CD4-positive, alpha-beta T cell (primary cell): ENCODE measurements at regions of chr15 and their contacts with region 1.

Region 1: DNA sequence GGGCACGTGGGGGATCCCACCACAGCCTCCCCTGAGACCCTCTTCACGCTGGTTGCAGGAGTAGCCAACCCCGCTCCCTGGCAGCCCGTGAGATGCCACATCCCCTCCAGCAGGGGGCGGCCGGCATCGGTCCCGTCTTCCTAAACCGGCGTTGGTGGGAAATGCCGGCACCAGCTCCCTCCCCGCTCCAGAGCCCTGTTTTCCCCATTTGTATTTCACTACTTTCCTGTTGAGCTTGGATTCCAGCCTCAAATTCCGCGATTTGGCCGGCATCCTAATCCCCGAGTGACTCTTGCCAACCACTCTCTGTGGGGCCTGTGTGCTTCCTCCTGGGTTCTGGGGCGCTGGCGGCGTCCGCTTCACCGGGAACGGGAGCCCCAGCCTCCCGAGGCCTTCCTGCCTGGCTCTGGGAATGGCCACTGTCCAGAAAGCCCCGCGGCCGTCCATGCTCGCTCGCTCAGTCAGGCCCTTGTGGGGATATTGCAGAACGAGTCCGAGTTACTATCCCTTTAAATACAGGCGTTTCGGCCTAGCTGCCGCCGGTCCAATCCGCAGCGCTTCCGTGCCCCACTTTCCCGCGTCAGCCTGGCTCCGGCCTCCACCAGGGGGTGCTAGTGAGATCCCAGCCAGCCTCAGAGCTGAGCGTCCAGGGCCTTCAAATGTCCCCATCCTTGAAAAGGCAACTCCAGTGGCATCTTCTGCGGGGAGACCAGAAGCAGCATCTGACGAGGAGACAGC is 8.1 kb upstream of the ADAMTS17 start:
- DNase-seq: peak; percentile 72 to 91 (median 79)
- ATAC-seq: peak; percentile 92
- H3K4me3 ChIP-seq: peak overlapping the region; percentile 92
- H3K4me3 Mint-ChIP-seq: peak overlapping the region; percentile 98
- H3K27ac ChIP-seq: peak overlapping the region; percentile 59 to 72
- H3K27ac Mint-ChIP-seq: peak overlapping the region; percentile 83
- H3K4me1 ChIP-seq: peaks cover 14% of the 10 kb centered on the region
- H3K4me1 Mint-ChIP-seq: peaks cover 13% of the 10 kb centered on the region
- H3K27me3 ChIP-seq: peaks cover 12 to 18% of the 10 kb centered on the region in 2 experiments
- H3K27me3 Mint-ChIP-seq: peaks cover 34% of the 10 kb centered on the region
- CTCF ChIP-seq: peak; percentile 90

Region 2: GRCh38 chr15:99733268-99734039 is 616.4 kb before region 1 on chr15 and contains the start of gene LYSMD4:
- CTCF ChIA-PET with region 1: no interaction called
- POLR2A ChIA-PET with region 1: no interaction called
- intact Hi-C with region 1: loop called in 1 of 2 experiments (anchors 5 kb)
- DNase-seq: peak; percentile 97 to 99 (median 98)
- ATAC-seq: peak; percentile 98
- H3K4me3 ChIP-seq: peak within 1 kb of the TSS; percentile 80
- H3K4me3 Mint-ChIP-seq: peak within 1 kb of the TSS; percentile 94
- H3K27ac ChIP-seq: peak within 1 kb of the TSS; percentile 81 to 85
- H3K27ac Mint-ChIP-seq: peak within 1 kb of the TSS; percentile 94
- H3K4me1 ChIP-seq: peaks cover 16% of the 10 kb centered on the region
- H3K4me1 Mint-ChIP-seq: peaks cover 28% of the 10 kb centered on the region
- H3K27me3 ChIP-seq: no peaks in the 10 kb centered on the region
- H3K27me3 Mint-ChIP-seq: no peaks in the 10 kb centered on the region
- CTCF ChIP-seq: no peak
- total RNA-seq, gene LYSMD4: 12.9 to 13.0 TPM

Region 3: GRCh38 chr15:100383302-100384107 is 33.6 kb after region 1 on chr15:
- CTCF ChIA-PET with region 1: interaction called, 11 read pairs
- POLR2A ChIA-PET with region 1: no interaction called
- intact Hi-C with region 1: no loop called
- DNase-seq: peak in 5 of 14 experiments; percentile 13 to 58 (median 50)
- ATAC-seq: no peak
- H3K4me3 ChIP-seq: no peak overlapping the region
- H3K4me3 Mint-ChIP-seq: no peak overlapping the region
- H3K27ac ChIP-seq: no peak overlapping the region
- H3K27ac Mint-ChIP-seq: no peak overlapping the region
- H3K4me1 ChIP-seq: no peaks in the 10 kb centered on the region
- H3K4me1 Mint-ChIP-seq: no peaks in the 10 kb centered on the region
- H3K27me3 ChIP-seq: no peaks in the 10 kb centered on the region
- H3K27me3 Mint-ChIP-seq: peaks cover 7% of the 10 kb centered on the region
- CTCF ChIP-seq: peak; percentile 22

Region 4: GRCh38 chr15:100596792-100597191 is 246.9 kb after region 1 on chr15:
- CTCF ChIA-PET with region 1: interaction called, 18 read pairs
- POLR2A ChIA-PET with region 1: interaction called, 23 read pairs
- intact Hi-C with region 1: loop called in 1 of 2 experiments (anchors 10 kb)
- DNase-seq: peak; percentile 58 to 96 (median 87)
- ATAC-seq: peak; percentile 84
- H3K4me3 ChIP-seq: peak overlapping the region; percentile 42
- H3K4me3 Mint-ChIP-seq: peak overlapping the region; percentile 71
- H3K27ac ChIP-seq: peak overlapping the region; percentile 75 to 81
- H3K27ac Mint-ChIP-seq: no peak overlapping the region
- H3K4me1 ChIP-seq: peaks cover 69% of the 10 kb centered on the region
- H3K4me1 Mint-ChIP-seq: peaks cover 77% of the 10 kb centered on the region
- H3K27me3 ChIP-seq: no peaks in the 10 kb centered on the region
- H3K27me3 Mint-ChIP-seq: no peaks in the 10 kb centered on the region
- CTCF ChIP-seq: no peak

Region 5: DNA sequence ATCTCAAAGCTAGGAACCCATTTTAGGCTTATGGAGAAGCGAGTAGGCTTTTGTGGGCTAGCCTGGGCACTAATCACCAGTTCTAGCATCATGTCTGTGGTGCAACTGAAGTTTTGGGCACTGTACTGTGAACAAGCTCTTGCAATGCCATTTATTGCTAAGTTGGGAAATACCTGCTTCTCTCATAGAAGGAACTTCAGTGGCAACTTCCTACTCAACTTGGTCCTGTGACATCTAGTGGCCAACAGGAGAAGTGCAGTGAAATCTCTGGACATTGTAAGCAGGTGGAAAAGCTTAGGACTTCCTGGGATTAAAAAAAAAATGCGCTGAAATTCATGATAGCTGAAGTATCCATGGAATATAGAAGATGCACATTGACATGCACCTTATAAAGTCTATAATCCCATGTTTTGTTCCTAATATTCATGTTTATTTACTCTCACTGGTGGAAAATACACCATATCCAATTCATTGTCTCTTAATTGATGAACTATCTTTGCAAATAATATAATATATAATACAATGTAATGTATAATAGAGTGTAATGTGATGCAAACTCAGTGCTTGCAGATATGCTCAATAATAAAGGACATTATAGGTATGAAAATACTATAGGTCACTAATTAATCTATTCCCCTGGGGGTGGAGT is 523.3 kb after region 1 on chr15:
- CTCF ChIA-PET with region 1: interaction called, 6 read pairs
- POLR2A ChIA-PET with region 1: no interaction called
- intact Hi-C with region 1: loop called (anchors 1 to 5 kb)
- DNase-seq: peak in 13 of 14 experiments; percentile 7 to 77 (median 35)
- ATAC-seq: peak; percentile 57
- H3K4me3 ChIP-seq: no peak overlapping the region
- H3K4me3 Mint-ChIP-seq: no peak overlapping the region
- H3K27ac ChIP-seq: no peak overlapping the region
- H3K27ac Mint-ChIP-seq: no peak overlapping the region
- H3K4me1 ChIP-seq: no peaks in the 10 kb centered on the region
- H3K4me1 Mint-ChIP-seq: no peaks in the 10 kb centered on the region
- H3K27me3 ChIP-seq: peaks cover 13 to 15% of the 10 kb centered on the region in 2 experiments
- H3K27me3 Mint-ChIP-seq: peaks cover 36% of the 10 kb centered on the region
- CTCF ChIP-seq: peak; percentile 94

Region 6: GRCh38 chr15:101277038-101277882 is 927.4 kb after region 1 on chr15 and contains the start of gene SELENOS:
- CTCF ChIA-PET with region 1: no interaction called
- POLR2A ChIA-PET with region 1: no interaction called
- intact Hi-C with region 1: loop called in 1 of 2 experiments (anchors 10 kb)
- DNase-seq: peak; percentile 68 to 95 (median 84)
- ATAC-seq: peak; percentile 96
- H3K4me3 ChIP-seq: peak within 1 kb of the TSS; percentile 92
- H3K4me3 Mint-ChIP-seq: peak within 1 kb of the TSS; percentile 97
- H3K27ac ChIP-seq: peak within 1 kb of the TSS; percentile 56 to 58
- H3K27ac Mint-ChIP-seq: peak within 1 kb of the TSS; percentile 95
- H3K4me1 ChIP-seq: peaks cover 23% of the 10 kb centered on the region
- H3K4me1 Mint-ChIP-seq: peaks cover 24% of the 10 kb centered on the region
- H3K27me3 ChIP-seq: no peaks in the 10 kb centered on the region
- H3K27me3 Mint-ChIP-seq: no peaks in the 10 kb centered on the region
- CTCF ChIP-seq: no peak
- total RNA-seq, gene SELENOS: 41.7 to 48.5 TPM